MCF 10A (cell line): ENCODE measurements at regions of chr16 and their contacts with region 1.

Region 1: GRCh38 chr16:20849587-20850390 is 43.5 kb downstream of the REXO5 start:
- DNase-seq: peak; percentile 78
- H3K4me3 Mint-ChIP-seq: no peak overlapping the region
- H3K27ac Mint-ChIP-seq: peak overlapping the region; percentile 79
- H3K4me1 Mint-ChIP-seq: peaks cover 19% of the 10 kb centered on the region
- H3K27me3 Mint-ChIP-seq: no peaks in the 10 kb centered on the region
- CTCF ChIP-seq: peak; percentile 95

Region 2: GRCh38 chr16:20424129-20424866 is 425.5 kb before region 1 on chr16:
- CTCF ChIA-PET with region 1: no interaction called
- POLR2A ChIA-PET with region 1: no interaction called
- intact Hi-C with region 1: no loop called
- DNase-seq: no peak
- H3K4me3 Mint-ChIP-seq: no peak overlapping the region
- H3K27ac Mint-ChIP-seq: no peak overlapping the region
- H3K4me1 Mint-ChIP-seq: peaks cover 12% of the 10 kb centered on the region
- H3K27me3 Mint-ChIP-seq: no peaks in the 10 kb centered on the region
- CTCF ChIP-seq: no peak

Region 3: DNA sequence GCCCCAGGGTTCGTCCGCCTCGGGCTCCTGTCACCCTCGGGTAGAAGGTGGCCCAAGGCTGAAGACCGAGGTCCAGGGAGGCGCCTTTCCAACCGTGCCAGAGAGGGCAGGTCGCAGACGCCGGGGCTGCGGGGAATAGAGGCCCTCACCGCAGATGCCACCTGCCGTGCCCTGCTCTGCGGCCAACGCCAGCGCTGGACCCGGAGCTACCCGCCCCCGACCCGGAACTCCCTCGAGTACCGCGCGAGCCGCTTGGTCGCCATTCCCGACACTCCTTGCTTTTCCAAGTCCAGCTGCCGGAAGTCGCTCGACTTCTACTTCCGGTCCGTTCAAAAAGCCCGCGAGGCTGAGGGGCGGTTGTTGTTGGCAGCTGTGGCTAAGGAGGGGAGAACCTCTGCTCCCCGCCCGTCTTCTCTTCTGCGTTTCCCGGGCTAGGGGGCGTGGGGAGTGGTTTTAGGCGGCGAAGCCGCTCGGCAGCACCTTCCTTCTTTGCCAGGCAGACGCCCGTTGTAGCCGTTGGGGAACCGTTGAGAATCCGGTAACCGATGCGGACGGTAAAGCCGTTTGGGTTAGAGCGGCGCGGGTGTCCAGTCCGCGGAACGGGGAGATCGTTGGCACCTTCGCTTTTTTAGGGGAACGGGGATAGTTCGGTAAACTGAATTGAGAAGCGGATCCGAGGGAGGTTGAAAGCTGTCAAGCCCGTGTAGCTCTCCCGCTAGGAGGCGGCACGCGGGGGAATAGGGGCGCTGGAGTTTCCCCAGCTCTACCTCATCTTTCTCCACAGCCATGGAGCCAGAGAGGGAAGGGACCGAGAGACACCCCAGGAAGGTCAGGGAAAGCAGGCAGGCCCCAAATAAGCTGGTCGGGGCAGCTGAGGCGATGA is 43.4 kb before region 1 on chr16 and contains the starts of genes ERI2 and REXO5:
- CTCF ChIA-PET with region 1: interaction called, 8 read pairs
- POLR2A ChIA-PET with region 1: interaction called, 25 read pairs
- intact Hi-C with region 1: loop called (anchors 2 kb)
- DNase-seq: peak; percentile 95
- H3K4me3 Mint-ChIP-seq: peak within 1 kb of the TSS; percentile 97
- H3K27ac Mint-ChIP-seq: peak within 1 kb of the TSS; percentile 93
- H3K4me1 Mint-ChIP-seq: peaks cover 6% of the 10 kb centered on the region
- H3K27me3 Mint-ChIP-seq: no peaks in the 10 kb centered on the region
- CTCF ChIP-seq: peak; percentile 44
- total RNA-seq, gene ERI2: 26.8 and 28.4 TPM in 2 replicates
- total RNA-seq, gene REXO5: 3.8 and 6.1 TPM in 2 replicates

Region 4: DNA sequence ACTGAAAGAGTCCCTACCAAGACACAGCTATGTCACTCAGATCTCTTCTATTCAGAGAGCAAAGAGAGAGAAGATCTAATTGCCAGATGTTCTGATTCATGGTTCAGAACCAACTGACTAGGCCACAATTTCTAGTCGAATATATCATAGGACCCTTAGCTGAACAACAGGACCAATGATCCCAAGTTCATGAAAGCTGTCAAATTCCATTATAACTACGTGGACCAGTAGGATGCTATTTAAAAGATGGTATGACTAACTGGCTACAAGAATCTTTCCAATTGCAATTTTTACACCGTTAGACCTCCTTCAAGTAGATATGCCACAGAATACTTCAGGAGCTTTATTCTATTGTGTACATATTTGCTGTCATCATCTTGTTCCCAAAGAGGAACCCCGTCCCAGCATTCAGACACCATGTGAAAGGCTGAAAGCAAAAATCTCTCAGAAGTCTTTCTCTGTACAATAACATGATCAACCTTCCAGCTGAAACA is 24.3 kb after region 1 on chr16:
- CTCF ChIA-PET with region 1: interaction called, 18 read pairs
- POLR2A ChIA-PET with region 1: interaction called, 260 read pairs
- intact Hi-C with region 1: no loop called
- DNase-seq: no peak
- H3K4me3 Mint-ChIP-seq: no peak overlapping the region
- H3K27ac Mint-ChIP-seq: no peak overlapping the region
- H3K4me1 Mint-ChIP-seq: peaks cover 51% of the 10 kb centered on the region
- H3K27me3 Mint-ChIP-seq: no peaks in the 10 kb centered on the region
- CTCF ChIP-seq: no peak

Region 5: DNA sequence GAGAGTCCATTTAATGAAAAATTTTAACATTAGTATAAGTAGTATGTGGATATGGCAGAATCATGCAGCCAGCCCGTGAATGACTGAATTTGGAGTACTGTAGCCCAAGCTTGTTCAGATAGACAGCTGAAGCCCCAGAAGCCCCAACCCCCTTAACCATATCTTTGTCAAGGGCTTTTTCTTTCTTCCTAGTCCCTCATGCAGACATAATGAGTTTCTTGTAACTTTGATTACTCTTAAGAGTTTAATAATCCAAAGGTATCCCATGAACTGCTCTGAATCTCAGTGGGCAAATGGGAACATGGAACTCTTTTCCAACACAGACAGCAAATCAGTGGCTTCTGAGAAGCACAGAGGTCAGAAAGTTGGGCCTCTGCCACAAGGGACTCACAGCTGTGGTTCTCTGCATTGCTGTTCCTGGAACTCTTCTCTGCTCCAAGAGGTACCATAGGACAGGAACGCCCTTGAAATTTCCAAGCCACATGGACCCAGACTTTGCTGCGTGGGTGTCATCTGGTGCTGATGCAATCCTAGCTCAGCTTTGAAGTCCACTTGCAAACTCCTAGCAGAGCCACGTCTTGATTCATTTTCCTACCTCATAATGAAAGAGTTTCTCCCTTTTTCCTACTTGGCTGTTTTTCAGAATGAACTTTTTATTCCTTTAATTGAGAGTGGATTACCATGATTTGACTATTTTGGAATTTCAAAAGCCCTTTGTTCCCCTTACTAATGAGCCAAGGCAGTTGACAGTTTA is 68.9 kb after region 1 on chr16:
- CTCF ChIA-PET with region 1: interaction called, 15 read pairs
- POLR2A ChIA-PET with region 1: interaction called, 14 read pairs
- intact Hi-C with region 1: no loop called
- DNase-seq: peak; percentile 77
- H3K4me3 Mint-ChIP-seq: no peak overlapping the region
- H3K27ac Mint-ChIP-seq: peak overlapping the region; percentile 70
- H3K4me1 Mint-ChIP-seq: peaks cover 24% of the 10 kb centered on the region
- H3K27me3 Mint-ChIP-seq: no peaks in the 10 kb centered on the region
- CTCF ChIP-seq: no peak

Region 6: DNA sequence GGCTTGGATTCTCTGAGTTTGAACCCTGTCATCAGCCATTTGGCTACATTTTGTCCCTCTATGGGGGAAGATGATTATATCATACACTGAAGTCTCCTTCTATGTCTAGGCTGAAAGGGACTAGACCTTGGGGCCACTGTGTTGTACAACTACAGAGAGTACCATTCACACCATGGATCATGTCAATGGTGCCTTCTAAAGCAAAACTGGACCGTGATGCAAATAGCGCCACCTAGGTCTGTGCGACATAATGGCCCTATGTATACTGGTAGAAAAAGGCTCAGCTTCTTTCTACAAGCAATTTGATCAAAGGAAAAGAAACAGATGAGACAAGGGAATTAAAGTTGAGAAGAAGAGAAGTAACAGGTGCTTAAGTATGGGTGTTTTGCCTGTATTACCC is 151.5 kb after region 1 on chr16:
- CTCF ChIA-PET with region 1: interaction called, 4 read pairs
- POLR2A ChIA-PET with region 1: no interaction called
- intact Hi-C with region 1: loop called (anchors 5 kb)
- DNase-seq: peak; percentile 27
- H3K4me3 Mint-ChIP-seq: no peak overlapping the region
- H3K27ac Mint-ChIP-seq: no peak overlapping the region
- H3K4me1 Mint-ChIP-seq: peaks cover 7% of the 10 kb centered on the region
- H3K27me3 Mint-ChIP-seq: peaks cover 12% of the 10 kb centered on the region
- CTCF ChIP-seq: peak; percentile 15

Region 7: GRCh38 chr16:21101631-21102420 is 252.0 kb after region 1 on chr16:
- CTCF ChIA-PET with region 1: interaction called, 53 read pairs
- POLR2A ChIA-PET with region 1: interaction called, 3 read pairs
- intact Hi-C with region 1: loop called (anchors 1 kb)
- DNase-seq: peak; percentile 43
- H3K4me3 Mint-ChIP-seq: no peak overlapping the region
- H3K27ac Mint-ChIP-seq: no peak overlapping the region
- H3K4me1 Mint-ChIP-seq: peaks cover 16% of the 10 kb centered on the region
- H3K27me3 Mint-ChIP-seq: no peaks in the 10 kb centered on the region
- CTCF ChIP-seq: peak; percentile 30

Region 8: DNA sequence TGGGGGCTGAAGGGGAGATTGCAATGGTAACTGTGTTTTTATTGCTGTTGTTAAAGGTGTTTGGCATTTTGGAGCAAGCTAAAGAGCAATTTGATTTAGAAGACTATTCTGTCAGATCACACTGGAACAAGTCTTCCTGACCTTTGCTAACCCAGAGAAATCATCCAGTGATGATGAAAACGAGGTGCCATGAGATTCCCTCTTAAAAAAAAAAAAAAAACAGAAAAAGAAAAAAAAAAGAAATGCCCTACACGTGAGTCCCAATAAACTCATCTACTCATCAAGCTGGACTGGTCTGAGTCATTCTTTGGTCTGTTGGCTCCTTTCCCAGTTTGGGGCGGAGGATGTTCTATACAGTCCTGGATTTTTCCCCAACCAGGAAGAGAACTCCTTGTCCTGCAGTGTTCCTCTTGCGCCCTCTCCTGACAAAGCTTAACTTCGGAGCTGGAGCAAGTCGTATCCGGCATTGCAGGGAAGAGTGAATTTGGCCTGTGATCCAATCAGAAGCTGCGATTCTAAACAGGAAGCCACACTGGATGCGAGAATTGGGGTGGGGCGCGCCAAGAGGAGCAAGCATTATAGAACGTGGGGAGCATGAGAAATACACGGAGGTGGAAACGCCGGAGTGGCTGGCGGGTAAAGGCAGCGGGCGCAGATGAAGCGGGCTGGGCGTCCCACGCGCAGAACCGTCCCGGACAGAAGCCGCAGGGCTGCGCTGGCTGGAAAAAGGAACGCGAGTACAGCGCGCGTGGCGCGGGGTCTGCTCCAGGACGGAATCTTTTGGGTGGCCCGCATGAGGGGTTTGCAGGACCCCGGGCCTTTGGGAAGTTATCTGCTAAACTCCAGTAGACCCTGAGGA is 450.7 kb after region 1 on chr16:
- CTCF ChIA-PET with region 1: interaction called, 8 read pairs
- POLR2A ChIA-PET with region 1: interaction called, 43 read pairs
- intact Hi-C with region 1: loop called (anchors 1 kb)
- DNase-seq: peak; percentile 100
- H3K4me3 Mint-ChIP-seq: peak overlapping the region; percentile 94
- H3K27ac Mint-ChIP-seq: peak overlapping the region; percentile 98
- H3K4me1 Mint-ChIP-seq: peaks cover 26% of the 10 kb centered on the region
- H3K27me3 Mint-ChIP-seq: no peaks in the 10 kb centered on the region
- CTCF ChIP-seq: peak; percentile 85